ENCODE measurements at regions of chr20 and their contacts with region 1.

Region 1: GRCh38 chr20:23995905-23996666 is 7.5 kb upstream of the GGTLC1 start:
- DNase-seq: peak; percentile 35 to 78
- H3K4me3 ChIP-seq: no peak overlapping the region
- H3K4me1 ChIP-seq: no peaks in the 10 kb centered on the region
- H3K27me3 ChIP-seq: 0 out of 2 replicates have a peak, but pooled peaks cover 10% of the 10 kb centered on the region

Region 2: GRCh38 chr20:23782366-23782985 is 213.6 kb before region 1 on chr20:
- in situ Hi-C with region 1: loop called (anchors 25 kb)
- DNase-seq: peak in 1 of 2 experiments; percentile 17
- H3K4me3 ChIP-seq: no peak overlapping the region
- H3K4me1 ChIP-seq: no peaks in the 10 kb centered on the region
- H3K27me3 ChIP-seq: no peaks in the 10 kb centered on the region

Region 3: DNA sequence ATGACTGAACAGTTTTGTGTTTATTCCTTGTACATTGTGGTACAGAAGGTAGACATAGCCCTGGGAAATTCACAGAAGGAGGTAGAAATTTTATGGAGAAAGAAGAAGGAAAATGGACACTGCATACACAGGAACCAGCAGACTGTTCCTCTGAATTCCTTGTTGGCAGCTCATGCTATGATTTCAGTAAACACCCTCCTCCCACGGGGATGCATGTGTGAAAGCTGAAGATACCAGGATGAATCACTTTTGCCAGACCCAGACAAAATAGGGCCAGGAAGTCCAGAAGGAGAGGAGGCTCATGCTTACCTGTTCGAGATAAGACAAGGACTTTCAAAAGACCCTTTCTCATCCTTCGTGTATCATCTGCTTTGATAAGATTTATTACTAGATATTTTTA is 102.8 kb after region 1 on chr20:
- in situ Hi-C with region 1: no loop called
- DNase-seq: no peak
- H3K4me3 ChIP-seq: no peak overlapping the region
- H3K4me1 ChIP-seq: no peaks in the 10 kb centered on the region
- H3K27me3 ChIP-seq: no peaks in the 10 kb centered on the region

Region 4: DNA sequence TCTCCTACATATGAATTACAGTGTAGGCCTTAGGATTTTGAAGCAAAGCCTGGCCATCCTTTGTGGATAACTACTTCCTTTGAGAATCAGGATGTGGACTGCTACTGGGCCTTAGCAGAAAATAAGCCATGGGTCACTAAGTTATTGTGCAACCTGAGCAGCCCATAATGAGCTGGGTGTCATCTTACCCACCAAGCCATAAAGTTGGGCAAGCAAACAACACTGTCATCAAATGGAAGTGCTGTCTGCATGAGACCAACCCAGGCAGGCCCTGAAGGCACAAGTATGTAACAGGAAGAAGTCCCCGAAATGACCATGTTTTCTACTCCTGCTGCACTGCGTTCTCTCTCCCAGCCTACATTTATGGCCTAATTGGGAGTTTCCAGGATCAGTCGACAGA is 198.1 kb after region 1 on chr20:
- in situ Hi-C with region 1: no loop called
- DNase-seq: no peak
- H3K4me3 ChIP-seq: no peak overlapping the region
- H3K4me1 ChIP-seq: no peaks in the 10 kb centered on the region
- H3K27me3 ChIP-seq: no peaks in the 10 kb centered on the region

Measured in HAP-1 (cell line).